ENCODE measurements at regions of chr5 and their contacts with region 1.

Region 1: DNA sequence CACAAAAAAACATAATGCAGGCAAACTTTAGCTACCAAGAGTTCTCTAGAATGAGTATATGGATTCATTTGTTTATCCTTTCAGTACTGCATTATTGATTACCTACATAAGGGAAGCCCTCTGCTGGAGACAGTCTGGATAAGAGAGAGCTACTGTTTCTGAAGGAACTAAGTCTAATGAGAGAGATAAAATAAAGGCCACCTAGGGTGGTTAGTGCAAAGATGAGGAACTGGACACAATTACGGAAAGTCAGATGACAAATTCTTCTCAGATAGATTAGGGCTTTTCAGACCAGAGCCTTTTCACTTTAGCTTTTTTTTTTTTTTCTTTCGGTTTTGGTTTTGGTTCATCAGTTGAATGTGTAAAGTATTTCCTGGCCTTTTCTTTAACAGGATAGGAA is 31.3 kb downstream of the ISOC1 start:
- DNase-seq: no peak
- H3K4me3 ChIP-seq: no peak overlapping the region
- H3K27ac ChIP-seq: no peak overlapping the region
- H3K4me1 ChIP-seq: no peaks in the 10 kb centered on the region
- H3K27me3 ChIP-seq: no peaks in the 10 kb centered on the region
- CTCF ChIP-seq: no peak
- POLR2A ChIP-seq: no peak

Region 2: DNA sequence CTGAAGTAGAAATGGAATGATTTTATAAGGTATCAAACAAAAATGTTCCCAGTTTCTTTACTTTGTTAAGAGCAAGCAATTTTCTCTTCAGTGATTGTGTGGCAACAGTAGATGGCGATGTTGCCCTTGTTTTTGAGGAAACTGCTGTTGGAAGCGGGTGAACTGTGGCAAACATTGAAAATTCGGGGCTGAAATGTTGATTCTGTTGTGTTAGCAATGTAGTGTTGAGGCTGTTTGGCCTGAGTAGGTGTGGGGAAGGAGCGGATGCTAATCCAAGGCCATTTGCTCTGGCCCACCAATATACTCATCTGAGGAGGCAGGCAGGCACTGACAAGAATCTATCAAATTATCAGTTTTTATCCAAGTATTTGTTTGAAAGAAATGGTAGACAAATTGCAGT is 912.5 kb before region 1 on chr5:
- CTCF ChIA-PET with region 1: interaction called, 4 read pairs
- POLR2A ChIA-PET with region 1: no interaction called
- dilution Hi-C with region 1: no loop called
- intact Hi-C with region 1: loop called (anchors 1 kb)
- DNase-seq: peak; percentile 68
- H3K4me3 ChIP-seq: no peak overlapping the region
- H3K27ac ChIP-seq: no peak overlapping the region
- H3K4me1 ChIP-seq: no peaks in the 10 kb centered on the region
- H3K27me3 ChIP-seq: no peaks in the 10 kb centered on the region
- CTCF ChIP-seq: peak; percentile 63 to 73
- POLR2A ChIP-seq: no peak

Region 3: DNA sequence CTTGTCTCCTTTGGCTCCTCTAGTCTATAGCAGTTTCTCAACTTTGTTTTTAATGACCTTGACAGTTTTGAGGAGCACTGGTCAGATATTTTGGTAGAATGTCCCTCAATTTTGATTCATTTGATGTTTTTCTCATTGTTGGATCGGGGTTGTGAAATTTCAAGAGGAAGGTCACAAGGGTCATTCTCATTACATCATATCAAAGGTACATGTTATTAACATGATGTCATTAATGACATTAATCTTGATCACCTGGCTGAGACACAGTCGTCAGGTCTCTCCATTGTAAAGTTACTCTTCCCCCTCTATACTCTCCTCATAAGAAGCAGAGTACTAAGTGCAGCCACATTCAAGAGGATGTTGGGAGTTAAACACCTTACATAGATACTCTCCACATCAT is 24.0 kb before region 1 on chr5:
- CTCF ChIA-PET with region 1: interaction called, 11 read pairs
- POLR2A ChIA-PET with region 1: no interaction called
- dilution Hi-C with region 1: no loop called
- intact Hi-C with region 1: no loop called
- DNase-seq: no peak
- H3K4me3 ChIP-seq: no peak overlapping the region
- H3K27ac ChIP-seq: no peak overlapping the region
- H3K4me1 ChIP-seq: peaks cover 8% of the 10 kb centered on the region
- H3K27me3 ChIP-seq: no peaks in the 10 kb centered on the region
- CTCF ChIP-seq: no peak
- POLR2A ChIP-seq: no peak